Activated naive CD4-positive, alpha-beta T cell treated with anti-CD3 and anti-CD28 coated beads for 36 hours (primary cell): ENCODE measurements at regions of chr14 and their contacts with region 1.

Region 1: GRCh38 chr14:54773171-54773975 is 129.3 kb downstream of the GCH1 start:
- DNase-seq: peak; percentile 95
- H3K4me3 Mint-ChIP-seq: peak overlapping the region; percentile 44
- H3K27ac Mint-ChIP-seq: peak overlapping the region; percentile 84
- H3K4me1 Mint-ChIP-seq: peaks cover 51% of the 10 kb centered on the region
- H3K27me3 Mint-ChIP-seq: no peaks in the 10 kb centered on the region

Region 2: GRCh38 chr14:54396493-54397335 is 376.7 kb before region 1 on chr14 and contains the start of gene CDKN3:
- CTCF ChIA-PET with region 1: no interaction called
- intact Hi-C with region 1: loop called (anchors 1 kb)
- DNase-seq: peak; percentile 99
- H3K4me3 Mint-ChIP-seq: peak within 1 kb of the TSS; percentile 86
- H3K27ac Mint-ChIP-seq: peak within 1 kb of the TSS; percentile 65
- H3K4me1 Mint-ChIP-seq: peaks cover 8% of the 10 kb centered on the region
- H3K27me3 Mint-ChIP-seq: peaks cover 2% of the 10 kb centered on the region
- total RNA-seq, gene CDKN3: 96.5 to 101 TPM

Region 3: GRCh38 chr14:54509546-54510501 is 263.5 kb before region 1 on chr14 and contains the start of gene CGRRF1:
- CTCF ChIA-PET with region 1: interaction called, 6 read pairs
- intact Hi-C with region 1: loop called (anchors 1 kb)
- DNase-seq: peak; percentile 98
- H3K4me3 Mint-ChIP-seq: peak within 1 kb of the TSS; percentile 86
- H3K27ac Mint-ChIP-seq: peak within 1 kb of the TSS; percentile 52
- H3K4me1 Mint-ChIP-seq: peaks cover 41% of the 10 kb centered on the region
- H3K27me3 Mint-ChIP-seq: no peaks in the 10 kb centered on the region
- total RNA-seq, gene CGRRF1: 9.2 to 9.7 TPM

Region 4: DNA sequence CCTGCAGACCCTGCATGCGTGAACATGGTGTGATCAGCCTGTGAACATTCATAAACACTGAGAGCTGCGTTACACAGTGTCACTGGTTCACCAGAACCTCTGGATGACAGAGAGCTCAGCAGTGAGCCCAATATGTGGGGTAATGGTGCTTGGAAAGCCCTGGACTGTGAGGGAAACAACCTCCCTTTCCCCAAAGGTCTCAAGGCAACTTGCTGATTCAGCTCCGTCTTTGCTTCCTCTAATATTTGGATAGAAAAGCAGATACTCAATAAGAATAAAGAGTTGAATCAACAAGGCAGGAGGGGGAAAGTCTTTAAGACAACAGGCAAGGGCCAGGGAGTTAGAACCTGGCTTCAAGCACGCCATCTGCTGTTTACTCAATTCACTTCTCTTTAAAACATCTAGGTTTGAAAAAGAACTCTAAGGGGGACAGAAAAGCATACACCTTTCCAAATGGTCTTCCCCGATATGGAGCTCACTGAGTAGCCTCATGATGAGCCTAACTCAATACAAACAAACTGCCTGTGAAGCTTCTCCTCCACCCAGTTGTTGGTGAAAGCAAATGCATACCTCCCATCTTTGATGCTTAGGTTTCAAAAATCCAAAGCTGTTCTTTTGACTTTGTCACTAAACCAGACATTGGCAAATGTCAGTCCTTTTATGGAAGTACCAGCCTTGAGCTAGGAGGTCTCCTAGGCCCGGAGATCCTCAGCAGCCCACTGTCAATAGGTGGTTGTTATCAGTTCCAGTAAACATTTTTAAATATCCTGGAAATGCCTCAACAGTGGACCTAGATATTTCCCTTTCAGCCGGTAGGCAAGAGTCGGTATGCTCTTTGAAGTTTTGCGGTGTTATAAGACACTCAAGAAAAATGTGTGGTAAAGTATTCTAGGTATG is 130.3 kb before region 1 on chr14:
- CTCF ChIA-PET with region 1: interaction called, 11 read pairs
- intact Hi-C with region 1: loop called (anchors 1 kb)
- DNase-seq: peak; percentile 28
- H3K4me3 Mint-ChIP-seq: no peak overlapping the region
- H3K27ac Mint-ChIP-seq: no peak overlapping the region
- H3K4me1 Mint-ChIP-seq: peaks cover 19% of the 10 kb centered on the region
- H3K27me3 Mint-ChIP-seq: no peaks in the 10 kb centered on the region

Region 5: GRCh38 chr14:54709444-54709843 is 63.9 kb before region 1 on chr14:
- CTCF ChIA-PET with region 1: interaction called, 6 read pairs
- intact Hi-C with region 1: loop called (anchors 1 kb)
- DNase-seq: peak; percentile 20
- H3K4me3 Mint-ChIP-seq: no peak overlapping the region
- H3K27ac Mint-ChIP-seq: no peak overlapping the region
- H3K4me1 Mint-ChIP-seq: peaks cover 17% of the 10 kb centered on the region
- H3K27me3 Mint-ChIP-seq: no peaks in the 10 kb centered on the region

Region 6: DNA sequence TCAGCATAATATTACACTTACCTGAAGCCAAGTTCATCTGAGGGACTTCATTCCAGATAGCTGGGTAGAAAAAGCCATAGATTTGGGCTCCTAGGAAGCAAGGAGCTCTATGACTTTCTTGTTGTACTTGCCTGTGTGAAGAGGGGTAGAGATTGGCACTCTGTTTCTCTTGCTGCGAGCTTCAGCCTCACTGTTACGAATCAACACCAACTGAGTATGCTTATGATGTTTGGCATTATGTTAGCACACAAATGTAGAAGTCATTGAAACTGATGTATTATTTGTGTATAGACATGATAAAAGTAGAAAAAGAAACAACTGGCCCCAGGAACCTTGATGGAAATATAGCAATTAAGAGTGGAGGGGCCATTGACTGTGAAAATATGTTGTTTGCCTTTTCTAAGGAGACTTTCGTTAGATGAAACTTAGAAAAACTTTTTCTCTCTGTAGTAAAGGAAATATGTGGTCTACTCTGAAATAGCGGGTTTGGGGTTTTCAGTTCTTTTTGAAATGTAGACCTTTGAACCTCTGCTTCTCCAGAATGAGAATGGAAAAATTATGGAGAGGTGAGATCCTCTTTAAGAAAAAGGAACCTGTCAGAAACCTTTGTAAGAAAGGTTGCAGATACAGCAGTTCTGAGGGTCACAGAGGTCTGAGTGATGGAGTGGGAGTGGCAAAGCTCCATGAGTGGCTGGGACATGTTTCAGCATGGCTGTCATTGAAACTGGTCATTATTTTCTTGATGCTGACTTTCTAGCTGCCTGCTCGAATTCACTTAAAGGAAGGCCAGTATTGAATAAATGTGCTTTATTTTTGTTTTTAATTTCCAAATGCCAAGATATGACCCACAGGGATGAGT is 30.7 kb before region 1 on chr14:
- CTCF ChIA-PET with region 1: interaction called, 11 read pairs
- intact Hi-C with region 1: loop called (anchors 1 kb)
- DNase-seq: no peak
- H3K4me3 Mint-ChIP-seq: no peak overlapping the region
- H3K27ac Mint-ChIP-seq: no peak overlapping the region
- H3K4me1 Mint-ChIP-seq: peaks cover 35% of the 10 kb centered on the region
- H3K27me3 Mint-ChIP-seq: no peaks in the 10 kb centered on the region

Region 7: GRCh38 chr14:54829455-54830224 is 56.3 kb after region 1 on chr14:
- CTCF ChIA-PET with region 1: no interaction called
- intact Hi-C with region 1: no loop called
- DNase-seq: no peak
- H3K4me3 Mint-ChIP-seq: no peak overlapping the region
- H3K27ac Mint-ChIP-seq: no peak overlapping the region
- H3K4me1 Mint-ChIP-seq: no peaks in the 10 kb centered on the region
- H3K27me3 Mint-ChIP-seq: no peaks in the 10 kb centered on the region

Region 8: DNA sequence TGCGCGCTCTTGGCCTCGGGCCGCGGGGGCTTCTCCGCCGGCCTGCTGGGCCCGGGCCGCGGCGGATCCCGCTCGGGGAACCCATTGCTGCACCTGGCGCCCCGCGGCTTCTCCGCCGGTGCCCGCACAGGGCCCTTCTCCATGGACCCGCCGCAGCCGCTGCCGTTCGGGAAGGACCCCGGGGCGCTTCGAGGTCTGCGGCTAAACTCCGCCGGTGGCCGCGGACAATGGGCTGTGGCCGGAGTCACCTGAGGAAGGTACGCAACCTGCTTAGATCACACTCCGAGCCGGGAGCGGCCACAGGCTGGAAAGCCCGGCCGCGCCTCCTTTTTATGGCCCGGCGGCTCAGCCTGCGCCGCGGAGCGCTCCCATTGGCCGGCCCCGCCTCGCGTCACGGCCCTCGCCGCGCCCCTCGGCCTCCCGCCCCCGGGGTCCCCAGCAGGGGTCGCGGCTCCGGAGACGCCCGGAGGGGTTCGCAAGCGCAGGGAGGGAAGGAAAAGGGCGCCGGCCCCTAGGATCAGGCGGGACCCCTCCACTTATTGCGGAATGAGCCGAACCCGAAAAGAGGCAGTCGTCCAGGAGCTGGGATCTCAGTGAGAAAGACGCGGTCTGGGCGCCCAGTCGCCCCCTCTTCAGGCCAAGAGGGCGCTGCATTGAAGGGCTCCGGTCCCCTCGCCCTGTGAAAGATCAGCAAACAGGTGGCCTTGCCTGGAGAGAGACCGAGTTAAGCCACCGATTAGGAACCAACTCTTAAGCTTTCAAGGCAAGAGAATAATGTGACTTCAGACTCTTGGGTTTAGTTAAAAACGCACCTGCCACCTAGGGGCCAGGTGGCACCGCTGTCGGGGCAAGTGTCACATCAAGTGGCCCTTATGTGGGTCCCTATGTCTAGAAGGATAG is 129.4 kb after region 1 on chr14 and contains the start of gene GCH1:
- CTCF ChIA-PET with region 1: interaction called, 14 read pairs
- intact Hi-C with region 1: loop called (anchors 1 kb)
- DNase-seq: peak; percentile 72
- H3K4me3 Mint-ChIP-seq: peak within 1 kb of the TSS; percentile 86
- H3K27ac Mint-ChIP-seq: peak within 1 kb of the TSS; percentile 88
- H3K4me1 Mint-ChIP-seq: peaks cover 20% of the 10 kb centered on the region
- H3K27me3 Mint-ChIP-seq: no peaks in the 10 kb centered on the region
- total RNA-seq, gene GCH1: 56.8 to 57.3 TPM

Region 9: GRCh38 chr14:55201224-55202050 is 428.1 kb after region 1 on chr14:
- CTCF ChIA-PET with region 1: no interaction called
- intact Hi-C with region 1: no loop called
- DNase-seq: no peak
- H3K4me3 Mint-ChIP-seq: no peak overlapping the region
- H3K27ac Mint-ChIP-seq: no peak overlapping the region
- H3K4me1 Mint-ChIP-seq: no peaks in the 10 kb centered on the region
- H3K27me3 Mint-ChIP-seq: no peaks in the 10 kb centered on the region